ENCODE measurements at regions of chr2 and their contacts with region 1.

Region 1: DNA sequence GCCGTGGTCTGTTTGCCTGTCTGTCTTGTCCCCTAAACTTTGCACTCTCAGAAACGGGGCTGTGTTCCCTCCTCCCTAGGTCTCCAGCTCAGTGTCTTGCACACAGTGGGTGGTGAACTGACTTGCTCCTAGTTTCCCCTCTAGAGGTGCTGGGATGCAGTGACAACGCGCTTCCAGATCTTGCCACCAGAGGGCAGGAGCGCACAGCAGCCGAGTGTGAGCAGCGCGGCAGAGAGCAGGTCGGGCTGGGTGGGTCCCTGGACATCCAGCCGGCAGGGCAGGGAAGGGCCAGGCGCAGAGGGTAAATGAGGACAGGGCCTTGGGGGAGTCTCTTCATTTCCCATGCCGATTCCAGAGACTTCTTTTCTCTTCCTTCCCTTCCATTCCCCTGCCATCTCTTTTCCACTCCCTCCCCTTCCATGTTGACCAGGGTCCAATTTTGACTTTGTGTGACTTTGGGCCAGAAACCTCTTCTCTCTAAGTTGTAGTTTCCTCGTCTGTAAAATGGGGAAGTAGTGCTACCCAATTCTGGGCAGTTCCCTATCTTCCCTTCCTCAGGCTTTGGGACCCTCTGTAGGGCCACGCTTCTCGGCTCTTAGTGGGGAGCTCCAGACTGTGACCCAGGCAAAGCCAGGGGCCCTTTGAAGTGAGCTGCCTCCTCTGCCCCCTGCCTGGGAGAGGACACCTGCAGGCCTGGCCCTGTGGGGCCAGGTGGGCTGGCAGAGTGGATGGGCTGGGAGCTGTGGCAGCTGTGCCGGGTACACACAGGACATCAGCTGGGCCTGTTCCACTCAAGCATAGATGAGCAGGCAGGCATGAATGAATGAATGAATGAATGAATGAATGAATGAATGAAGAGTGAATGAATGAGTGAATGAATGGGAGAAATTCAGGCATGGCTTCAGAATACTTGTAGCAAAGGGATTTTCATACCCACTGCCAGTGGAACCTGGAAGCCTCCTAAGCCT is 43.3 kb upstream of the TAF1B start:
- DNase-seq: peak; percentile 81
- H3K4me3 ChIP-seq: no peak overlapping the region
- H3K27ac ChIP-seq: peak overlapping the region; percentile 93
- H3K4me1 ChIP-seq: peaks cover 54% of the 10 kb centered on the region
- H3K27me3 ChIP-seq: no peaks in the 10 kb centered on the region
- CTCF ChIP-seq: peak; percentile 98 to 100

Region 2: GRCh38 chr2:9057939-9058761 is 741.8 kb before region 1 on chr2:
- CTCF ChIA-PET with region 1: no interaction called
- dilution Hi-C with region 1: no loop called
- in situ Hi-C with region 1: no loop called
- intact Hi-C with region 1: no loop called
- DNase-seq: peak; percentile 69
- H3K4me3 ChIP-seq: no peak overlapping the region
- H3K27ac ChIP-seq: no peak overlapping the region
- H3K4me1 ChIP-seq: no peaks in the 10 kb centered on the region
- H3K27me3 ChIP-seq: no peaks in the 10 kb centered on the region
- CTCF ChIP-seq: no peak

Region 3: DNA sequence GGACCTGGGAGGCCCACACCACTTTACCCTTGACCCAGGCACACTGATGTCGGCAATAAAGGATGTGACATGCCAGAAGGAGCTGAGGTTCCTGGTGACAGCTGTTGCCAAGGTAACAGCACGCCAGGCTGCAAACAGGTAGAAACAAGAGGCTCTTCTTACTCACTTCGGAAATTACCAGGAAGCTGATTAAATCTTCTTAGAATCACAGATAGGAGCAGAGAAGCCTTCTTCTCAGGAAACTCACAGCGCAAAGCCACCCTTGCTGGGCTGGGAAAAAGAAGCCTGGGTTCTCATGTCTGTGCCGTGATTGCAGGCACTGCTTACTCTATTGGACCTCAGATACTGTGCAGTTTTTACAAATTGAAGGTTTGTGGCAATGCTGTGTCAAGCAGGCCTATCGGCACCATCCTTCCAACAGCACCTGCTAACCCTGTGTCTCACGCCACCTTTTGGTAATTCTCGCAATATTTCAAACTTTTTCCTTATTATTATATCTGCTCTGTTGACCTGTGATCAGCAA is 17.7 kb before region 1 on chr2:
- CTCF ChIA-PET with region 1: no interaction called
- dilution Hi-C with region 1: no loop called
- in situ Hi-C with region 1: no loop called
- intact Hi-C with region 1: loop called (anchors 1 kb)
- DNase-seq: peak; percentile 88
- H3K4me3 ChIP-seq: no peak overlapping the region
- H3K27ac ChIP-seq: peak overlapping the region; percentile 79
- H3K4me1 ChIP-seq: peaks cover 28% of the 10 kb centered on the region
- H3K27me3 ChIP-seq: no peaks in the 10 kb centered on the region
- CTCF ChIP-seq: no peak

Region 4: DNA sequence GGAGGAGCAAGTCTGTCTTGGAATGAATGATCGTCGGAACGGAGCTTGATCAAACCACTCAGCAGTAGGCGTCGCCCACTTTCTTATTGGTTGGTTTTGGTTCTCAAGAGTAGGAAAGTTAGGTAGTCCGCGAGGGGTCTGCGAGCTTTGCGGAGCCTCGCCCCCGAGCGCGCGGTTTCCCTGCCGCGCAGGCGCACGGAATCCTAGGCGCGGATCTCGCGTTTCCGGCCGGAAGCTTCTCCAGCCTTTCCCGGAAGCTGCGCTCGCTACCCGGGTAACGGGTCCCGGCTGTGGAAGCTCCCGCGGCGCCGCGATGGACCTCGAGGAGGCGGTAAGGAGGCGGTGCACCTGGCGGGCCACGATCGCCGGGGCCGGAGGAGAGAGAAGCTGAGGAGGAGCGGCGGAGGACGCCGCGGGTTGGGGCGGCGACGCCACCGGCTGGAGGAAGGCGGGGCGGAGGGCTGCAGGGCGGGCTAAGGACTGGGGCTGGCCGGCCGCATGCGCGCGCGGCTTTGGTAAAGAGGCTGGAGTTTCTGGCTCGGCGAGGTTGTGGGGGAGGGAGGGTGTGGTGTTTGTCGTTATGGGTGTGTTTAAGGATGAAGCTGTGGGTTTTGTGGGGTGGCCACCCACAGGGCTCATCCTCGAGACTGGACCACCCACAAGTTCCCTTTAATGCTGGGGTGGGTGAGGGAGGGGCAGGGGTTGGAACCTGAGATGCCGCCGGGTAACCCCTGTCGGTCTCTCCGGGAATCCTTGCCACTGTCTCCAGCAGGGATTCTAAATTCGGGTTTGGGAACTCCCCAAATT is 43.5 kb after region 1 on chr2 and contains the start of gene TAF1B:
- CTCF ChIA-PET with region 1: interaction called, 4 read pairs
- dilution Hi-C with region 1: no loop called
- in situ Hi-C with region 1: no loop called
- intact Hi-C with region 1: loop called (anchors 1 kb)
- DNase-seq: peak; percentile 95
- H3K4me3 ChIP-seq: peak within 1 kb of the TSS; percentile 69 to 83 (median 73)
- H3K27ac ChIP-seq: peak within 1 kb of the TSS; percentile 91
- H3K4me1 ChIP-seq: peaks cover 40% of the 10 kb centered on the region
- H3K27me3 ChIP-seq: no peaks in the 10 kb centered on the region
- CTCF ChIP-seq: peak; percentile 26 to 57
- total RNA-seq, gene TAF1B: 13.5 to 25.5 TPM

Region 5: DNA sequence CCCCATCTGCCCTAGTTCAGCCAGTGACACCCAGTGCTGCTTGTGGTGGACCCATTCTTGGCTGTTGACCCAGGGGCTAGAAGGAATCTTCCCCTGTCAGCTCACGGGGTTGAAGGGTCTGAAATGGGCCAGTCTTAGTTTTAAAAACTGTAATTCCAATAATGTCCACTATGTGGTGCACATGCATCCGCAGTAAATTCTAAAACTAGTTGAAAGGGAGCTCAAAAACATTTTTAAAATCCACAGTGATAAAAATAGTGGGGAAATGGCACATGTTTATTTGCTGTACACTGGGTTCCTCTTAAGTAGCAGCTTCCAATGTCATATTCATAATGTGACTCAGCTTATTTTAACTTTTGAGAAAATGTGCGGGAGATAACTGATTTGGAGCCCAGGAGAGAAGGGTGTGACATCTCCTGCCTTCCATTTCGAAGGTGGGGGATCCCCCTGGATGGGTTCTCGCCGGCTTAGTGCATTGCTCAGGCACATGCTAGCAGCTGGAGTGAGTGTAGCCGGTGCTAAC is 184.3 kb after region 1 on chr2:
- CTCF ChIA-PET with region 1: no interaction called
- dilution Hi-C with region 1: no loop called
- in situ Hi-C with region 1: no loop called
- intact Hi-C with region 1: loop called (anchors 1 kb)
- DNase-seq: peak; percentile 11
- H3K4me3 ChIP-seq: no peak overlapping the region
- H3K27ac ChIP-seq: no peak overlapping the region
- H3K4me1 ChIP-seq: no peaks in the 10 kb centered on the region
- H3K27me3 ChIP-seq: no peaks in the 10 kb centered on the region
- CTCF ChIP-seq: peak; percentile 65 to 79

Region 6: GRCh38 chr2:10122386-10123280 is 322.7 kb after region 1 on chr2 and contains the start of gene RRM2:
- CTCF ChIA-PET with region 1: no interaction called
- dilution Hi-C with region 1: no loop called
- in situ Hi-C with region 1: no loop called
- intact Hi-C with region 1: loop called (anchors 5 kb)
- DNase-seq: peak; percentile 88
- H3K4me3 ChIP-seq: peak within 1 kb of the TSS; percentile 43 to 93 (median 88)
- H3K27ac ChIP-seq: peak within 1 kb of the TSS; percentile 75
- H3K4me1 ChIP-seq: peaks cover 35% of the 10 kb centered on the region
- H3K27me3 ChIP-seq: no peaks in the 10 kb centered on the region
- CTCF ChIP-seq: no peak
- total RNA-seq, gene RRM2: 4.0 to 103 TPM